Right ventricle myocardium superior (tissue), 1 donor: ENCODE measurements at regions of chr16 and their contacts with region 1.

Region 1: GRCh38 chr16:47141773-47142485 is 1.8 kb downstream of the NETO2 start:
- DNase-seq: peak; percentile 82
- ATAC-seq: peak; percentile 92

Region 2: GRCh38 chr16:47180073-47180472 is 38.1 kb after region 1 on chr16:
- intact Hi-C with region 1: no loop called
- DNase-seq: no peak
- ATAC-seq: no peak

Region 3: DNA sequence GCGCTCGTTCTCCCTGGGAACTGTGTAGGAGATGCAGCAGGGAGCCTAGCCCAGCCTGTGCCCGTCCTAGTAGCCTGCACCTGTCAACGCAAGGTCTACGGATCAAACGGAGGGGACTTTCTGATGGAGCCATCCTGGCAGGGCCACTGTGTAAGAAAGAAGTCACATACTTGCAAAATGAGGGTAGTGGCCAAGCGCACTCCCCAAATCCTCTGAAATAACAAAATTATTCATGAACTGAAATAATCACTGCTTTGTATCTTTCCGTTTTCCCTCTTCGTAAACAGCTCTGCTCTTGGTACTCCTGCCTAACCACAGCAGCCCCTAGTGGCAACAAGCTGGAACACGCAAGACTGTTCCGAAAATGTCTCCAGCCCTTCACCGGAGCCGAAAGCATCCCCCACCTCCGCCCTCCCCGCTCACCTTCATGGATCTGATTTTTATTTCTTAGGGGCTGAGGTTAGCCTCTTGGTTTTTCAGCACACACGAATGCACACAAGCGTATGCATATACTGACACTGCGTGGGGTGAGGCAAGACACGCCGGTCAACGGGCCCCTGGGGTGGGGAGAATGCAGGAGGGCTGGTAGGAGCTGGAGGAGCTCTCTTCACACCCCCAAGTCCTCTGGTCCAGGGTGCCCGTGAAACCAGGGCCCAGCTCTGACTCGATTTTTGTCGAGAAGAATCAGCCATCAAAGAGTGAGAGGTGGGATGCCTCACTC is 913.1 kb after region 1 on chr16:
- intact Hi-C with region 1: loop called (anchors 5 kb)
- DNase-seq: peak; percentile 47
- ATAC-seq: peak; percentile 89

Region 4: DNA sequence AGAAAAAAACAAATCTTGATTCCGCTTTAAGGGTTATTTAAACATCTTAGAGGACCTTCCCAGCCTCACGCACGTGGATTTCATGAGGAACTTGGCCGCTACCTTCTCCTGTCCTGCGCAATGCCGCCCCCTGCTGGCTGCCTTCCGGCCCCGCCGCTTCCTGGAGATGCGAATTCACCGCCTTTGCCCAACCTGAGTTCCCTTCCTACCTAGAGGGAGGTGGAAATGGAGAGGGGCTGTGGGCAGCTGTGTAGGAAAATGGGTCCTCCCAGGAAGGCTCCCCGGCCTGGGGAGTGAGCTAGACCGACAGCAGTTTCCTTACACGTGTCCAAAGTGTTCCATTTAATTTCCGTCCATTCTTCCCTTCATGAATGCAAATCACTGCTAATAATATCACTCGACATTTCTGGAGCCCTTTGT is 1014.9 kb after region 1 on chr16:
- intact Hi-C with region 1: loop called (anchors 2 kb)
- DNase-seq: peak; percentile 90
- ATAC-seq: peak; percentile 90